ENCODE measurements at regions of chr1 and their contacts with region 1.

Region 1: DNA sequence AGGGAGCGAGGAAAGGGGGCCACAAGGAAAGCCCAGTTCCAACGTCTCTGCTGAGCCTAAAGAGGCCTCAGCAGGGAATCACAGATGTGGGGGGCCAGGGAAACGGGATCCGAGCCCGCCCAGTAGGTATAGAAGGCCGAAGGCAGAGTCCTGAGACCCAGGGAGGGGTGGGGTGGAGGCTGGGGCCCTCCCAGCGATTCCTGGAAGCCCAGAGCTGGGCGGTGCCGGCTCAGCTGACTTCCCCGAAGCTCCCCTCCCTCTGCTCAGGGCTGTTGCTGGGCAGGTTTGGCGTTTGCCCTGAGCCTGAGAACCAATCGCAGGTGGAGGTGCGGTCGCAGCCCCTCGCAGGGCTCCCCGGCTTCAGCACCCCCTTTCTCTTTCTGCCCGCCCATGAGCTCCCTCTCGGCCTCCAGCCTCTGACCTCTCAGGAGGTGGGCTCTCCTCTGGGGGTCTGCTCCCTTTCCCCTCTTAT is 12.8 kb downstream of the ADAMTSL4 start:
- DNase-seq: peak; percentile 86
- H3K4me3 ChIP-seq: peak overlapping the region; percentile 42 to 57 (median 42)
- H3K27ac ChIP-seq: peak overlapping the region; percentile 99
- H3K4me1 ChIP-seq: peaks cover 69% of the 10 kb centered on the region
- H3K27me3 ChIP-seq: no peaks in the 10 kb centered on the region
- CTCF ChIP-seq: no peak

Region 2: DNA sequence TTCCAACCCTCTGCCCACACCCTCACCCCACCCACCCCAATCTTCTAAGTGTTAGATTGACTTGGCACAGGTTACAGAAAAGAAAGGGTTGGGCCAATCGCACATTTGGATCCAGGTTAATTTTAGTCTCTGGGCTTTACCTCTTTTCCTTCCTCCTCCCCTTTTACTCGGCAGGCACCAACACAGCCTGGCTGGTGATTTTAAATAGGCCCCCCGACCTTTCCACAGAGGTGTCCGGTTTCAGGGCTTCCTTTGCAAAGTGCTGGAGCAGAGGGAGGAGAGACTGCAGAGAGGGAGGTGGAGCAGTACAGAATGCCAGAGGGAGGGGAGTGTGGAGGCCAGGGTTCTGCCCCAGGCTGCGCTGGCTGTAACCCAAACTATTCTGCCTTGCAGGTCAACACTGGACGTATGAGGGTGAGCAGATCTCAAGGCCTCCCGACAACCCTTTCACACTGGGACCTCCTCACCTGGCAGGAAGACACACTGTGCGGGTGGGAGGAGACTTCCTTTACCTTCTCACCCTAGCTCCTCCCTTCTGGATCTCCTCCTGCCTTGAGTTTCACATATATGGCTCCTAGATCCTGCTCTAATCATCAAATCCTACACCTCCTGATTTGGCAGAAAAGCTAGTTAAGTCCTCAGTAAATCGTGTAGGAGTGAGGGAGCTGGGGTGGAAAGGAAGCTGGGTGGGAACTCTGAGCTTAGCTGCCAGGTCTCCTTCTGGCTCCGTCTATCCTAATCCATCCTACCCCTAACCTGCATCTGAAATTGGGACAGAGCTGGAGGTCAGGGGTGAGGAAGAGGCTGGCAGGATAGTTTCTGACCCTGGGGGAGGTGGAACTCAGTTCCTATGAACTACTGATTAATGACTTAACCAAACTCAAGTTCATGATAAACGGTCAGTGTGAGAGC is 302.0 kb before region 1 on chr1:
- CTCF ChIA-PET with region 1: no interaction called
- dilution Hi-C with region 1: no loop called
- in situ Hi-C with region 1: no loop called
- intact Hi-C with region 1: loop called (anchors 1 kb)
- DNase-seq: peak; percentile 56
- H3K4me3 ChIP-seq: peak overlapping the region in 2 of 3 experiments; percentile 2 to 11
- H3K27ac ChIP-seq: peak overlapping the region; percentile 19
- H3K4me1 ChIP-seq: peaks cover 45% of the 10 kb centered on the region
- H3K27me3 ChIP-seq: no peaks in the 10 kb centered on the region
- CTCF ChIP-seq: no peak

Region 3: DNA sequence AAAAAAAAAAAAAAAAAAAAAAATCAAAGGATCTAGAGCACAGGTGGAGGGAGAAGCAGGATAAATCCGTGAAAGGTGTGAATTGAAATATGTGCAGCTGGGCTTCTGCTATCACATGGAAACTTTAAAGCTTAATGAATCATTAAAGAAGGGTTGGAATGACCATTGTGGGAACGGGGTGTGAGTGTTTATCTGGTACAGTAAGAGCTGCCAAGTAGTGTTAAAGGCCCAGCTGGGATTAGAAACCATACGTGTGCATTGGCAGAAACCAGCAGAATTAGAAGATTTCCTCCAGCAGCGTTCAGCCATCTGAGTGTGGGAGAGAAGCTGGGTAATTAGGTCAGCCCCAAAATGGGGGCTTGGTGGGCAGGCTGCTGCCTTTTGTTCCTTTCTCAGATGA is 33.0 kb before region 1 on chr1:
- CTCF ChIA-PET with region 1: no interaction called
- dilution Hi-C with region 1: no loop called
- in situ Hi-C with region 1: no loop called
- intact Hi-C with region 1: no loop called
- DNase-seq: peak; percentile 60
- H3K4me3 ChIP-seq: no peak overlapping the region
- H3K27ac ChIP-seq: no peak overlapping the region
- H3K4me1 ChIP-seq: peaks cover 16% of the 10 kb centered on the region
- H3K27me3 ChIP-seq: no peaks in the 10 kb centered on the region
- CTCF ChIP-seq: no peak

Region 4: GRCh38 chr1:150578965-150579798 is 17.2 kb after region 1 on chr1 and contains the start of gene MCL1:
- CTCF ChIA-PET with region 1: no interaction called
- dilution Hi-C with region 1: no loop called
- in situ Hi-C with region 1: no loop called
- intact Hi-C with region 1: loop called (anchors 1 kb)
- DNase-seq: peak; percentile 96
- H3K4me3 ChIP-seq: peak within 1 kb of the TSS; percentile 77 to 97 (median 85)
- H3K27ac ChIP-seq: peak within 1 kb of the TSS; percentile 89
- H3K4me1 ChIP-seq: peaks cover 19% of the 10 kb centered on the region
- H3K27me3 ChIP-seq: no peaks in the 10 kb centered on the region
- CTCF ChIP-seq: peak in 1 of 2 donors; percentile 9
- total RNA-seq, gene MCL1: 289 to 455 TPM

Region 5: DNA sequence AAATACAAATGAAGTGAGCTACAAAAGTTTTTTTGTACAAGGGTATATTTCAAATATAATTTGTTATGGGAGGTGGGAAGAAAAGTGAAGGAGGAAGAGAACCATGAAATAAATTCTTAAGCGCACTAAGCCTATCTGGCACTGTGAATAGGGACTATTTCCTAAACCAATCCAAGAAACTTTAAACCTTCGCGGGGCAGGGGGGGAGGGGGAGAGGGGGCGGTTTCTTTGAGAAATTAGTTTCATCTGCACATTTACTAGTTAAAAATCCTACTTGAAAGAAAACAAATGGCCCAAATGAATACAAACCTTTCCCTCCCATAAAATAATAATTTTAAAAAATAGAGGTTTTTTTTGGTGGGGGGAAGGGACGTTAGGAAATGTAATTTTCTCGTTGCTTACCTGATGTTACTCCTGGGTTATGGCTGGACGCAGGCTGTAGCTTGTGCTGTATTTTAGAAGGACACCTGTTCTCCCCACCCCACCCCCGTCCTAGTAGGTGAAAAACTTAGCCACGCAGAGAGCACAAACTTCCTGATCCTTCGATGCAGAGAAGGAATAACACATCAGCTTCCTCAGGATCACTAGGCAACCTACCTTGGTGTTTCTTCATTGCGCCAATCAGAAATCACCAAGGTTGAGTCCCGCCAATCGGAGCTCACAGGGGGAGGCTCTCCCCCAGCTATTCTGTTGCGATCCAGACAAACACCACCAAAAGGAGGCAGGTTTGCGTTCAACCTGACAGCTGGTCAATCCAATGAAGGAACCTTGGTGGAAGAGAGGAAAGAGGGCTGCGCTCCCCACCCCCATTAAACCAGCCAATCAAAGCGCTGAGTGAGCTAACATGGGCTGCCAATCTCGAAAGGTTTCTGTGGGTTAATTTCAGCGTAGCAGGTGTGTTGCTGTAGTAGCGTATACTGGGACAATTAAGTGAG is 134.8 kb after region 1 on chr1 and contains the start of gene GOLPH3L:
- CTCF ChIA-PET with region 1: interaction called, 3 read pairs
- dilution Hi-C with region 1: no loop called
- in situ Hi-C with region 1: no loop called
- intact Hi-C with region 1: loop called (anchors 2 kb)
- DNase-seq: peak; percentile 100
- H3K4me3 ChIP-seq: peak within 1 kb of the TSS; percentile 59 to 90 (median 60)
- H3K27ac ChIP-seq: peak within 1 kb of the TSS; percentile 65
- H3K4me1 ChIP-seq: peaks cover 8% of the 10 kb centered on the region
- H3K27me3 ChIP-seq: no peaks in the 10 kb centered on the region
- CTCF ChIP-seq: peak in 1 of 2 donors; percentile 31
- total RNA-seq, gene GOLPH3L: 11.7 to 22.4 TPM

Region 6: DNA sequence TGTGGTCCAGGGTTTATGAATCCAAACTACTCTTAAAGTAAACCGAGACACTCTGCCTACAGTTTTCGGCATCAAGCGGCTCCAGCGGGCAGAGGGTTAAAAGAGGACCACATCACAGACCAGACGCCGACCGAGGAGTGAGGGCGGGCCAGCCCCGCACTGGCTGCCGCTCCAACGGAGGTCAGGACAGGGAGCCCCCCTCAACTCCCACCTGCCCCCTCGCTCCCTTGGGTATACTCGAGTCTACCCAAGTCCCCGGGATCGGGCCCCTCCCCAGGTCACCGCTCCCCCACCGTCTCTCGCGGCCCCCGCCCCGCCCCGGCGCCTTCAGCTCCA is 314.1 kb after region 1 on chr1:
- CTCF ChIA-PET with region 1: no interaction called
- dilution Hi-C with region 1: no loop called
- in situ Hi-C with region 1: no loop called
- intact Hi-C with region 1: loop called (anchors 5 kb)
- DNase-seq: peak; percentile 45
- H3K4me3 ChIP-seq: peak overlapping the region; percentile 82 to 94 (median 84)
- H3K27ac ChIP-seq: peak overlapping the region; percentile 68
- H3K4me1 ChIP-seq: peaks cover 17% of the 10 kb centered on the region
- H3K27me3 ChIP-seq: no peaks in the 10 kb centered on the region
- CTCF ChIP-seq: peak in 1 of 2 donors; percentile 5

Region 7: GRCh38 chr1:150995896-150996295 is 433.9 kb after region 1 on chr1:
- CTCF ChIA-PET with region 1: no interaction called
- dilution Hi-C with region 1: no loop called
- in situ Hi-C with region 1: no loop called
- intact Hi-C with region 1: loop called (anchors 1 kb)
- DNase-seq: no peak
- H3K4me3 ChIP-seq: no peak overlapping the region
- H3K27ac ChIP-seq: no peak overlapping the region
- H3K4me1 ChIP-seq: no peaks in the 10 kb centered on the region
- H3K27me3 ChIP-seq: no peaks in the 10 kb centered on the region
- CTCF ChIP-seq: peak; percentile 42 to 59